ENCODE measurements at regions of chr9 and their contacts with region 1.

Region 1: GRCh38 chr9:92325269-92325990 is at the starts of genes CENPP and NOL8:
- DNase-seq: peak; percentile 92
- H3K4me3 ChIP-seq: peak within 1 kb of the TSS; percentile 92
- H3K27ac ChIP-seq: peak within 1 kb of the TSS; percentile 61
- H3K4me1 ChIP-seq: peaks cover 29% of the 10 kb centered on the region
- CTCF ChIP-seq: no peak
- total RNA-seq, gene CENPP: 30.9 and 42.0 TPM in 2 replicates
- total RNA-seq, gene NOL8: 29.3 and 30.1 TPM in 2 replicates

Region 2: DNA sequence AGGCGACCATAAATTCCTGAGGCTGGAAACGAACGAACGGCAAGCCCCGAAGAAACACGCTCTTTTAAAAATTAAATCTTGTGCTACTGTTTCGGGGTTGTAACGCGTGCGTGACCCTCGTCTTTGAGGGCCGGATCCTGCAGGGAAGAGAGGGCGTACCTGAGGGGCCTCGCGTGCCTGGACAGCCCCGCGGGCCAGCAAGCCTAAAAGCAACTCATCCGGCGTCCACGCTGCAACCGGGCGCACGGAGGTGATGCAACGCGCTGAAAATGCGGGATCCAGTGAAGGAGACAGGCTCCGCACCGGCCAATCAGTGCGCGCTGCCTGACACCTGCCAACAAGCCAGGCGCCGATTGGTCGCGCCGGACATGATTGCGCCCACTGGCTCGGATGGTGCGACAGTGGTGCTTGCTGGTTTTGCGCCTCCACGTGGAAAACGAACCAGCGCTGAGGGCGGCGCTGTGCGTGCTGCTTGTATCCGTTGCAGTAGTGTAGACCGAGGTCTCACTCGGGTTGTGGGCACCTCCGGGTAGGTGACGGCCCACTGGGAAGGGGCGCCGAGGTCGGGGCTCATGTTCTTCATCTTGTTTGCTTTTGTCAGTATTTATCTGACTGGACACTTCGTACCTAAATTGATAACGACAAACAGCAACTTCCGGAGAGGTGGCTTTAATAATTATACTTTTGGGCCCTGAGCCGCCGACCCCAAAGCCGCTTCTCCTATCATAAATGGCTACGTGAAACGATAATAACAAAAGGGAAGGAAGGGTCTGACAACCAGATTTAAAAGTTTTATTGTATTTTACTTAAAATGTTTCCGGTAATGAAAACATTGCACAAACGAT is 31.8 kb before region 1 on chr9 and contains the start of gene IARS1:
- CTCF ChIA-PET with region 1: no interaction called
- POLR2A ChIA-PET with region 1: interaction called, 7 read pairs
- intact Hi-C with region 1: loop called (anchors 1 kb)
- DNase-seq: peak; percentile 98
- H3K4me3 ChIP-seq: peak within 1 kb of the TSS; percentile 91
- H3K27ac ChIP-seq: peak within 1 kb of the TSS; percentile 92
- H3K4me1 ChIP-seq: peaks cover 63% of the 10 kb centered on the region
- CTCF ChIP-seq: peak; percentile 66
- total RNA-seq, gene IARS1: 352 and 392 TPM in 2 replicates

Region 3: DNA sequence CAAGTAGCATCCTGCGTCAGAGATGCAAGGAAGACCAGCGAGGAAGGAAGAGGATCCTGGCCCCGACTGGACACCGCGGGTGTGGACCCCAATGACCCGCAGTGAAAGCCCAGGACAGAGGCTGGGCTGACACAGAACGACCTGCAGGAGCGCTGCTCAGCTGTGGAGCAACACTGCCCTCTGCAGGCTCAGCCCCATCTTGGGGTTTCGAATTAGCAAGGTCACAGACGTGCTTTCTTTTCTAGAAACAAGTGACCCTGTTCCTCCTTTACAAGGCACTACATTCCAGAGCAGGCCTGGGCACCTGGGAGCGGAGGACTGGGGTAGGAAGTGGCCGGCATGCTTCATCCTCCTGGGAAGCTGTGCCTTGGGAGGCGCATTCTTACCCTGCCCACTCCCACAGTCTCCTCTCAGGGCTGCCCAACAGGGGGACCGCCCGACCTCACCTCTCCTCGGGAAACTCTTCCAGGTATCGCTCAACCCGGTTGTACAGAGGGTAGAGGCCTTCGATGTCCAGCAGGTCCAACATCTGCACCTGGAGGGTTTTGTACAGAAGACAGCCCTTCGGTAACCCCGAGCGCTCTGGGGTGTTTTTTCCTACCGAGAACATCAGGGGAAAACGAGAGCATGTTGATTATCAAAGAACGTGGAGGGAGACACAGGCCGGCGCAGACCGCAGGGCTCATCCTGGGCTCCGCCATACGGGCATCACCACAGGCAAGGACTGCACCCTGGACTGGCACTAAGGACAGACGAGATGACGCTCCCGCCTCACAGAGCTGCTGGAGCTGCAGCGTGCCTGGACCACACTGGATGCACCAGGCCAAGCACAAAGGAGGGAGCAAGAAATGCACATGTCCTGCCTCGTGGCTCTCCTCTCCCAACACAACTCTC is 309.5 kb after region 1 on chr9:
- CTCF ChIA-PET with region 1: no interaction called
- POLR2A ChIA-PET with region 1: no interaction called
- intact Hi-C with region 1: loop called (anchors 2 kb)
- DNase-seq: peak; percentile 71
- H3K4me3 ChIP-seq: no peak overlapping the region
- H3K27ac ChIP-seq: no peak overlapping the region
- H3K4me1 ChIP-seq: no peaks in the 10 kb centered on the region
- CTCF ChIP-seq: peak; percentile 97